ENCODE measurements at regions of chr15 and their contacts with region 1.

Region 1: GRCh38 chr15:66862878-66863335 is 160.9 kb downstream of the SMAD6 start:
- DNase-seq: peak; percentile 68
- H3K4me3 ChIP-seq: no peak overlapping the region
- H3K27me3 ChIP-seq: no peaks in the 10 kb centered on the region
- CTCF ChIP-seq: peak; percentile 97

Region 2: DNA sequence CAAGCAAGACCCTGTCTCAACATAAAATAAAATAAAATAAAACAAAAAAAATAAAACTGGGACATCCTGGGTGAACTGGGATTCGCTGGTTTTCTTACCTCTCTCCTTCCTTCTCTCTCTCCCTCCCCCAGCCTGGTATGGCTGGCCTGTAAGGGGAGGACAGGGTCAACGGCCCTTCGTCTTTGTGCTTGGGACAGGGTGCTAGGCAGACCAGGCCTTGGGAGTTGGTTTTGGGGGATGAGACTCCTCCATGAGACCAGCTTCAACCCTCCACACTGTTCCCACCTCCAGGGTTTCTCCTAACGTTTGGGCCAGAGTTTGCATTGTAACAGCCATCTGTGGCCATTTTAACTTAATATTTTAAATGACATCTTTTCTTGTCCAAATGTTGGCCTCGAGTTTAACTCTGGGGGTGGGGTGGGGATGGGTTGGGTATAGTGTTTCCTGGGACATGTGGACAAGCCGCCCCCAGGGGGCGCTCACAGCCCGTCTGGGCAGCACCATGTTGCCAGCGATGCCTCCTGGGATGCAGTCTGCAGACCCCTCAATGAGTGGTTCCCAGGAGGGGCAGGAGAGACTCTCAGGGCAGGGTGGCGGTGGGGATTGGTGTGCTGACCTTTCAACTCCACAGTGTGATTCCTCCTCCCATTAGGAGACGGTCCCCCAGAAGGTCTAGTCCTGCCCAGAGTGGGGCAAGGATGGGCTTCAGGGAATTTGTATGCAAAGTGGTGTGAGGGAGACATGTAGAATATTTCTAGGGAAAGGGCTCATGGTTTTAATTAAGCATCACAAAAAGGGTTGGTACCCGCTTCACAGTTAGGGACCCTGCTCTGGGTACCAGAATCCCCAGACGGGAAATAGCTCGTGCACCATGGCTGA is 259.4 kb before region 1 on chr15:
- CTCF ChIA-PET with region 1: interaction called, 10 read pairs
- POLR2A ChIA-PET with region 1: no interaction called
- DNase-seq: no peak
- H3K4me3 ChIP-seq: no peak overlapping the region
- H3K27me3 ChIP-seq: peaks cover 13% of the 10 kb centered on the region; the same call in 1 of the 2 replicates
- CTCF ChIP-seq: peak; percentile 93

Region 3: GRCh38 chr15:66780172-66780972 is 82.5 kb before region 1 on chr15:
- CTCF ChIA-PET with region 1: interaction called, 10 read pairs
- POLR2A ChIA-PET with region 1: no interaction called
- DNase-seq: no peak
- H3K4me3 ChIP-seq: no peak overlapping the region
- H3K27me3 ChIP-seq: no peaks in the 10 kb centered on the region
- CTCF ChIP-seq: no peak

Region 4: DNA sequence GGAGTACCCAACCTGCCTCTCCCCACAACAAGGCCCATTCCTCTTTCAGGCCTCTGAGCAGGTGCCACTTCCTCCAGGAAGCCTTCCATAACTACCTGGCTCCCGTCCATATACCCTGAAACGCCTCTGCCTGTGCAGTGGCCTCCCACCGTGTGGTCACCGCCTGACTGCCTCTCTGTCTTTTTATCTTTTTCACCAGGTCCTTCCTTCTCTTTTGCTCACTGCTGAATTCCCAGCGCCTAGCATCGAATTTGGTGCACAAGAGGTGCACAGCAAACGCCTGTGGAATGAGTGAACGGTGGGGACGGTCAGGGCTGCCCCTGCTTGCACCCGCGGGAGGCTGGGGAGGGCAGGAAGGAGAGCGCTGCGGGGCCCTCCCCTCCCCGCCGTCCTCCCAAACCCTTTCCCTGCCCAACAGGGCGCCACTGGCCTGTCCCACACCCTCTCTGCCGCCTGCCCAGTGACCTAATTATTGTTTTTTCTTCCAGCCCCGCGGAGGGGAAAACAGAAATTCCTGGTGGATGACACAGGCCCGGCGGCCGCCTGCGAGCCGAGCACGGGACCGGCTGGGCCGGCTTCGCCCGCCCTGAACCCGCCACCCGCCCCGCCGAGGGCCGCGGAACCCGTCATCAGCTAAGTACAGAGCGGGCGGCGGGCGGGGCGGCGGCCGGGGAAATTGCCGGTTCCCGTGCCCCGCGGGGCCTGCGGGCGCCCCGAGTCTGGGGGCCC is 20.8 kb before region 1 on chr15:
- CTCF ChIA-PET with region 1: no interaction called
- POLR2A ChIA-PET with region 1: no interaction called
- DNase-seq: peak; percentile 75
- H3K4me3 ChIP-seq: peak overlapping the region; percentile 45
- H3K27me3 ChIP-seq: no peaks in the 10 kb centered on the region
- CTCF ChIP-seq: no peak

Region 5: GRCh38 chr15:66878761-66879160 is 15.9 kb after region 1 on chr15:
- CTCF ChIA-PET with region 1: interaction called, 5 read pairs
- POLR2A ChIA-PET with region 1: interaction called, 13 read pairs
- DNase-seq: no peak
- H3K4me3 ChIP-seq: no peak overlapping the region
- H3K27me3 ChIP-seq: no peaks in the 10 kb centered on the region; the same call in 1 of the 2 replicates
- CTCF ChIP-seq: no peak

Region 6: DNA sequence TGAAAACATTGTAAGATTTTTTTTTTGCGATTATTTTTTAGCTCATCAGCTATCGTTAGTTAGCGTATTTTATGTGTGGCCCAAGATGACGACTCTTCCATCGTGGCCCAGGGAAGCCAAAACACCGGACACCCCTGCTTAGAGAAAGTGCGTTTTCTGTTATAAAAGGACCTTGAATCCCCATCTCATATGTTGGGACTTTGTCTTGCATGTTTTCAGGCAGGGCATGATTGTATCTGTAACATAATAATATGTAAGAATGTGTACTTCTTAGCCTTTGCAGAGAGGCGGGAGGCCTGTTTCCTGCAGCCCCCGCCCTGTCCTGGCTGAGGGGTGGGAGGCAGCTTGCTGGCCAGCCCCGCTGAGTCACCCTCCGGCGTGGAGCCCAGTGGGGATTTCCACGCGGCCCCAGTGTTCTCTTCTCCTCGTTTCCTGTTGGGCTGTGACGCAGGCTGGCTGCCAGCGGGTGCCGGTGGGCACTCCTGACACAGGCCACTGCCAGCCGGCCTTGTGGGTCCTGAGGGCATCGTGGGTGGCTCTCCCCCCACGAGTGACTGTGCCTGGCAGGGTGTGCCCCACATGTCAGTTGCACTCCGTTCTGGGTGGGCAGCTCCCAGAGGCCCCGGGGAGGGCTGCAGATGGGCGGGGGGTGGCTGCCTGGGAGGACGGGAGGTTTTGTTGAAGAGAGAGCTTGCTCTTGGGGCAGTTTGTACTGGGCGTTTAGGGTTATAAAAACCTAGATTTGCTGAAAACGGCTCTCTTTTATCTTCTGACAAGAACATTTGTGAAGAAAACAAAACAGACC is 258.1 kb after region 1 on chr15:
- CTCF ChIA-PET with region 1: no interaction called
- POLR2A ChIA-PET with region 1: no interaction called
- DNase-seq: no peak
- H3K4me3 ChIP-seq: no peak overlapping the region
- H3K27me3 ChIP-seq: no peaks in the 10 kb centered on the region
- CTCF ChIP-seq: no peak